Lower lobe of right lung (tissue), 2 donors: ENCODE measurements at regions of chr15 and their contacts with region 1.

Region 1: DNA sequence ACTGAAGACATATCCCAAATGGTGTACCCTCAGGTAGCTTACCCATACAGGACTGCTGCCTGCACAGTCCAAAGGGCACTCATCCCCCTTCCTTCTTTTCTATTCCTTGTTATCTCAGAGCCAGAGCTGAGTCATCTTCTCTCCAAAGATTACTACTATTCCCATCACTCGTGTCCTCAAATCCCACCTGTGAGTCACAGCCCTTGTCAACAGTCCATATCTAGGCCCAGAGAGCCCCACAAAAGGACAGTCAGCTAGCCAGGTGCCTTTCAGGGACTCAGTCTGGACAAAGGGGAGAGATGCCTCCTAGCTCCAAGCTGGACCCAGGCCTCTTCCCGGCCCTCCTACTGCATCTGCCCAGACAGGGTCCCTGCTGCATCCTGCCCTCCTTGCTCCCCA is 11.0 kb downstream of the PARP16 start:
- DNase-seq: no peak
- ATAC-seq: no peak
- H3K4me3 ChIP-seq: no peak overlapping the region
- H3K27ac ChIP-seq: no peak overlapping the region
- H3K4me1 ChIP-seq: peaks cover 2% of the 10 kb centered on the region
- H3K27me3 ChIP-seq: no peaks in the 10 kb centered on the region
- CTCF ChIP-seq: no peak

Region 2: GRCh38 chr15:64961013-64961412 is 314.7 kb before region 1 on chr15:
- intact Hi-C with region 1: no loop called
- DNase-seq: no peak
- ATAC-seq: no peak
- H3K4me3 ChIP-seq: no peak overlapping the region
- H3K27ac ChIP-seq: no peak overlapping the region
- H3K4me1 ChIP-seq: no peaks in the 10 kb centered on the region
- H3K27me3 ChIP-seq: no peaks in the 10 kb centered on the region
- CTCF ChIP-seq: no peak

Region 3: DNA sequence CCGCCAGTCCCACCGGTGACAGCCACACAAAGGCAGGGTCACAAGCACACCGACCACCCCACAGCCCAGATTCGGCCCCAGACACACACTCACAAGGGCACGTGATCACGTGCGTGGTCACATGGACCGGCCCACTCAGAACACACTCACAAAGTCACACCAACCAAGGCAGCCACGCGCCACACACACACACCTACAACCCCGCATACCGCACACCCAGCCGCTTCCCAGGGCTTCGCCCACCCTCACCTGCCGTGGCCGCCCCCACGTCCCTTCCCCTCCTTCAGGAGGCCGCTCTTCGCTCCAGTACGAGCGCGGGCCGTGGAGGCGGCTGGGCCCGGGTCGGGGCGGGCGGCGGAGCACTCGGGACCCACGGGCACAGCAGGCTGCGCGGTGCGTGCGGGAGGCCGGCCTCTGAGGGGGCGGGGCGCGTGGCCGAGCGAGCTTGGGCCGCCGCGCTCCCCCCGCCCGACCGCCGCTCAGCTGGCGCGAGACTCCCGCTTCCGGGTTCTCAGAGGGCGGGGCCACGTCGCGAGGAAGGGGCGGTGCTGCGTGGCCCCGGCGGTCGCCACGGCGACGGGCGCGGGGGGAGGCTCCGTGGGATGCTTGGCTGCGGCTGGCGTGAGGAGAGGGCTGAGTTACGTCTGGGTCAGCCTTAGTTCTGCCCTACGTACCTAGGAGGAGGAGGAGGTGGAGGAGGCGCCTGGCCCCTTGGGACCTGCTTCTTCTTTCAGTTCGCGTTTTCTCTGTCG is 286.1 kb before region 1 on chr15 and contains the start of gene SPG21:
- intact Hi-C with region 1: no loop called
- DNase-seq: peak; percentile 96
- ATAC-seq: peak; percentile 96 to 98
- H3K4me3 ChIP-seq: peak within 1 kb of the TSS; percentile 93
- H3K27ac ChIP-seq: peak within 1 kb of the TSS; percentile 94
- H3K4me1 ChIP-seq: peaks cover 47% of the 10 kb centered on the region
- H3K27me3 ChIP-seq: no peaks in the 10 kb centered on the region
- CTCF ChIP-seq: no peak
- total RNA-seq, gene SPG21: 110 TPM

Region 4: DNA sequence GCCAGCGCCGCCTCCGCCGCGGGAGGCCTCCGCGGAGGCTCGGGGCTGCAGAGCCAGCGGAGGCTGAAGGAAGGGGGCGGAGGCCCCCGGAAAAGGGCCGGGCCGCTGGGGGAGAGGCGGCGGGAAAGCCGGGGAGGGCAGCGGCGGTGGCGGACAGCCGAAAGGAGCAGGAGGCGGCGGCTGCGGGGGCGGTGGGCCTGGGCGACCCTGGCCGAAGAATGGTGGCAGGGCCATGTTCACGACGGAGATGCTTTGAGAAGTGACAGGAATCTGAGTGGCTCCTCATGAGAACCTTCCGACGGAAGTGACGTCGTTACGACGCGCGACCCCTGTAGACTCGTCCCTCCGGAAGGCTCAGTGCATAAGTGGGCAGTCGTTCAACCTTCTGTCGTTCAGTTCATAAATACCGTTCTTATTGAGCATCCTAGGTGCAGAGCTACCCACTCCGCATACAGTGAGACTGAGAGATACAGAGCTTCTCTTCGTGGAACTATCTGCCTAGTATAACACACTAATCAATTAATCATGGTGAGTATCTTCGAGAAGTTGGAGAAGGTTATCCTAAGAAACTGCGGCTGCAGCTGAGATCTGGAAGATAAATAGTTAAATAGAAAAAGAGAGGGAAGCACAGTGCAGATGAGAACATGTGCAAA is 142.1 kb before region 1 on chr15 and contains the start of gene PDCD7:
- intact Hi-C with region 1: no loop called
- DNase-seq: peak; percentile 95
- ATAC-seq: peak; percentile 94 to 96
- H3K4me3 ChIP-seq: peak within 1 kb of the TSS; percentile 84
- H3K27ac ChIP-seq: peak within 1 kb of the TSS; percentile 90
- H3K4me1 ChIP-seq: peaks cover 34% of the 10 kb centered on the region
- H3K27me3 ChIP-seq: no peaks in the 10 kb centered on the region
- CTCF ChIP-seq: no peak
- total RNA-seq, gene PDCD7: 19.8 TPM

Region 5: DNA sequence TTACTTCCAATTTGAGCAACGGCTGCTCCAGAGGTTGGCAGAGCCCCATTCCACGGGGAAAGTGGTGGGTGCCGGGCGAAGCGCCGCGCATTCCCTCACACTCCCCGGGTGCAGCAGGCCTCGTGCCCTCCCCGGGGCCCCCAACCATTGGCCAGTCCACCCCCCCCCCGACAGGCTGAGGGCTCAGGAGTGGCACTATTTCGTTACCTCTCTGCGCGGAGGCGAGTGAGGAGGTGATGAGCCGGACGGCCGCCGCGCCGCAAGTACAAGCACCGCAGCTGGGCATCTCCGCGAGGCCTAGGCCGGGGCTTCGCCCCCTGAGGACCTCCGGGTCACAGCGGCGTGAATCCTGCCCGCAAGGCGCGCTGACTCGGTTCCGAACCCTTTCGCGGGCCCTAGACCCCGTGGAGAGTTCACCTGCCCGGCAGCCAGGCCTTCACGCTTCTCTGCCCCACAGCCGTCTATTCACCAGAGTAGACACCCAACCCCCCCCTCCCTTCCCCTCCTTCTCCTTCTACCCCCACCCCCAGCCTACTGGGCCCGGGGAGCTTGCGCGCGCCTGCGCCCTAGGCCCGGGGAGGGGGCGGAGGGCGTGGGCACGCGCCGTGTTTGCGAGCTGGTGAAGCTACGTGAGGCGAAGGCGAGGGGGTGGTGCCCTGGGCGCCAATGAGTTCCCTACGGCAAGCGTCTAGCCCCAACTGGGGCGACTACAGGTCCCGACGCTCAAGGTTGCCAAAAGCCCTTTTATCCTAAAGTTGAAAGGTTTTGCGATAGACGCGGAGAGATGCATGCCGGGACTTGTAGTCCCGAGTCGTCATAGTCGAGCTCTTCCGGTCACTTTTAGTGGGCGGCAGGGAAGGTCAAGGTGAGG is 90.6 kb before region 1 on chr15 and contains the start of gene CLPX:
- intact Hi-C with region 1: loop called (anchors 10 kb)
- DNase-seq: peak; percentile 96
- ATAC-seq: peak; percentile 96 to 98
- H3K4me3 ChIP-seq: peak within 1 kb of the TSS; percentile 94
- H3K27ac ChIP-seq: peak within 1 kb of the TSS; percentile 93
- H3K4me1 ChIP-seq: peaks cover 21% of the 10 kb centered on the region
- H3K27me3 ChIP-seq: no peaks in the 10 kb centered on the region
- CTCF ChIP-seq: no peak
- total RNA-seq, gene CLPX: 43.4 TPM